Gastrocnemius medialis (tissue), 4 donors: ENCODE measurements at regions of chr15 and their contacts with region 1.

Region 1: GRCh38 chr15:76931397-76932007 is at the start of gene RCN2:
- DNase-seq: peak; percentile 93 to 95
- ATAC-seq: peak; percentile 97 to 99
- H3K4me3 ChIP-seq: peak within 1 kb of the TSS; percentile 59 to 86 (median 63)
- H3K27ac ChIP-seq: peak within 1 kb of the TSS; percentile 78 to 89 (median 82)
- H3K4me1 ChIP-seq: peaks cover 14 to 15% of the 10 kb centered on the region in 2 donors
- H3K27me3 ChIP-seq: no peaks in the 10 kb centered on the region
- CTCF ChIP-seq: peak in 2 of 5 experiments; percentile 7 to 23
- POLR2A ChIP-seq: peak; percentile 74 to 89
- total RNA-seq, gene RCN2: 23.2 to 32.2 (median 30.4) TPM

Region 2: GRCh38 chr15:76905013-76905839 is 26.3 kb before region 1 on chr15 and contains the start of gene SCAPER:
- in situ Hi-C with region 1: no loop called
- intact Hi-C with region 1: loop called (anchors 1 kb)
- DNase-seq: peak; percentile 90 to 91
- ATAC-seq: peak; percentile 90 to 92
- H3K4me3 ChIP-seq: peak within 1 kb of the TSS; percentile 89 to 99 (median 94)
- H3K27ac ChIP-seq: peak within 1 kb of the TSS; percentile 94 to 99 (median 98)
- H3K4me1 ChIP-seq: peaks cover 24 to 25% of the 10 kb centered on the region in 2 donors
- H3K27me3 ChIP-seq: no peaks in the 10 kb centered on the region
- CTCF ChIP-seq: peak in 3 of 5 experiments; percentile 16 to 17 (median 17)
- POLR2A ChIP-seq: peak; percentile 87 to 92
- total RNA-seq, gene SCAPER: 19.6 to 35.9 (median 31.8) TPM

Region 3: DNA sequence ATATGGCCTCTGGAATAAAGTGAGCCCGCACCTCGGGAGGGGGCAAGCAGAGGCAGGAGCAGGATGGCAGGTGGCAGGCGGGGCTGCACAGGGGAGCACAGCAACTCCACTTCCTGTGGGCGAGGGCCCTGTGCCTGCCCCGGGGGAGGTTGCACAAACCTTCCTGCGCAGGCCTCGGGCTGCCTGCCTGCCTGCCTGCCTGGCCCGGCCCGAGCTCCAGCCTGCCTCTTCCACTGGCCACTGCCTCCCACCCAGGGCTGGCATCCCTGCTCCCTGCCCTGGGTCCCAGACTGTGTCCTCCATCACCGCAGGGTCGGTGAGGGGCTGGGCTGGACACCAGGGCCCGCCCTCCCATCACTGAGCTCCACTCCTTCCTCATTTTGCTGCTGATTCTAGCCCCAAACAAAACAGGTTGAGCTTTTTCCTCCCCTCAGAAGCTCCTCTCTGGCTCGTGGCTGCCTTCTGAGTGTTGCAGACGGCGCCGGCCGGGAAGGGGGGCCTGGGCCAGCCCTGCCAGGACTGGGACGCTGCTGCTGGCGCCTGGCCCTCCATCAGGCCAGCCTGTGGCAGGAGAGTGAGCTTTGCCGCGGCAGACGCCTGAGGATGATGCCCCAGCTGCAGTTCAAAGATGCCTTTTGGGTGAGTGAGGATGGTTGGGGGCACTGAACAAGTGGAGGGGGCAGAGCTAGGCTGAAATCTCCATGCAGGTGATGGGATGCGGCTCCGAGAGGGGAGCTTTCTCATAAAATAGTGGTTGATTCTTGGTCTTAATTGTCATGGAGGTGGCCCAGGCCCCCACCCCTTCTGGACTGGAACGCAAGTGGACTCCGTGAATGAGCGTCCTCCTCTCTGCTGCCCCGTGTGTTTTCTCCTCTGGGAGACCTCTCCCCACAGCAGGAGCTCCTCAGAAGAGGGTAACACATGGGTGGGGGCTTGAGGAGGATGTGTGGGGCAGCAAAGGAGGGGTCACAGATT is 63.8 kb after region 1 on chr15 and contains the start of gene PSTPIP1:
- in situ Hi-C with region 1: no loop called
- intact Hi-C with region 1: no loop called
- DNase-seq: no peak
- ATAC-seq: no peak
- H3K4me3 ChIP-seq: peak within 1 kb of the TSS in 2 of 4 donors; percentile 14 to 35
- H3K27ac ChIP-seq: no peak within 1 kb of the TSS
- H3K4me1 ChIP-seq: peaks cover 0 to 4% of the 10 kb centered on the region in 2 donors
- H3K27me3 ChIP-seq: no peaks in the 10 kb centered on the region
- CTCF ChIP-seq: no peak
- POLR2A ChIP-seq: no peak
- total RNA-seq, gene PSTPIP1: 0.76 to 5.2 (median 3.1) TPM in 3 of 4 donors, not detected in the other